Activated CD4-positive, alpha-beta memory T cell treated with anti-CD3 and anti-CD28 coated beads for 36 hours (primary cell): ENCODE measurements at regions of chr9 and their contacts with region 1.

Region 1: GRCh38 chr9:123322273-123323195 is 33.5 kb upstream of the CRB2 start:
- DNase-seq: peak; percentile 79
- H3K4me3 Mint-ChIP-seq: peak overlapping the region; percentile 14
- H3K27ac Mint-ChIP-seq: peak overlapping the region; percentile 81
- H3K4me1 Mint-ChIP-seq: peaks cover 23% of the 10 kb centered on the region
- H3K27me3 Mint-ChIP-seq: no peaks in the 10 kb centered on the region

Region 2: GRCh38 chr9:123305879-123306278 is 16.7 kb before region 1 on chr9:
- CTCF ChIA-PET with region 1: no interaction called
- POLR2A ChIA-PET with region 1: no interaction called
- intact Hi-C with region 1: loop called (anchors 2 kb)
- DNase-seq: no peak
- H3K4me3 Mint-ChIP-seq: no peak overlapping the region
- H3K27ac Mint-ChIP-seq: no peak overlapping the region
- H3K4me1 Mint-ChIP-seq: peaks cover 12% of the 10 kb centered on the region
- H3K27me3 Mint-ChIP-seq: peaks cover 2% of the 10 kb centered on the region